Heart left ventricle (tissue), 16 donors: ENCODE measurements at regions of chr3 and their contacts with region 1.

Region 1: GRCh38 chr3:102224128-102224527 is 210.7 kb upstream of the ZPLD1 start:
- DNase-seq: peak in 1 of 5 donors; percentile 18
- ATAC-seq: peak in 3 of 4 donors; percentile 52 to 73 (median 61)
- H3K4me3 ChIP-seq: no peak overlapping the region
- H3K27ac ChIP-seq: no peak overlapping the region
- H3K4me1 ChIP-seq: peaks cover 0 to 31% (median 0%) of the 10 kb centered on the region in 12 donors
- H3K27me3 ChIP-seq: peaks cover 0 to 3% (median 0%) of the 10 kb centered on the region in 9 donors
- CTCF ChIP-seq: peak in 9 of 12 donors; percentile 16 to 52 (median 35)
- POLR2A ChIP-seq: no peak

Region 2: GRCh38 chr3:101695779-101696372 is 528.3 kb before region 1 on chr3:
- intact Hi-C with region 1: loop called in 4 of 10 experiments (anchors 5 to 10 kb)
- DNase-seq: no peak
- ATAC-seq: no peak
- H3K4me3 ChIP-seq: no peak overlapping the region
- H3K27ac ChIP-seq: no peak overlapping the region
- H3K4me1 ChIP-seq: peaks cover 0 to 5% (median 0%) of the 10 kb centered on the region in 12 donors
- H3K27me3 ChIP-seq: no peaks in the 10 kb centered on the region
- CTCF ChIP-seq: peak; percentile 58 to 82 (median 70)
- POLR2A ChIP-seq: no peak

Region 3: DNA sequence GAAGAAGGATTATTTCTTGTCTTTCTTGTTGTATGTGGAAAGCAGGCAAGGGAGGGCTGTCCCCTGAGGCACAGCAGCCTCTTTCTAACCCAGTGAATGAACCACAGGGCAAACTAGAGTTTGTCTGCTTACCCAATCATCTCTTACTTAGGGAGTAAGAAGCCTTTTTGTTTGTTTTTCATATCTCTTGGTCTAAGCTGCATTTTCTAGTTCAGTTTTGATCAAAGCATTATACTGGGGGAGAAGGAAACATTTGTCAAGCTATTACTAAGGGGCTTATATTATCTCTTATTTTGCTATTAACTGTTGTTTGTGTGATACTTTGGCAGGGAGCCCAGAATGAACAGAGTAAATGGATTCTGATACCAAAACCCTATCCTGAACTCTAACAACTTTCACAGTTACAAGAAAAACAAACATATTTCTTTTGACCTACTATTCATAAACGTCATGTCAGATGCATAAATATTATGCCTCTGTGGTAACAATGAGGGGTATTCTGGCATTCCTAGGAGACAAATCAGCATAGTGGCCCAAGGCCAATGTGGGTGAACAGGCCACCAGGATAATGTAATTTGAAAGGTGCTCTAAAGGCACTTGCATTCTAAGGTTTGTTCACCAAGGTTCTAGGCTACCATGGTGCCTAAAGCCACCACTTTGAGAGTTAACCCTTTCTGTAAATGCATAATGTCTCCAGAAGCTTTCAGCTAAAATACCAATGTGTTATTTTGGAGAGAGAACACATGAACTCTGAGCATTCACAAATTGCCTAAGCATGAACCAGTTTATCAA is 60.9 kb before region 1 on chr3:
- intact Hi-C with region 1: no loop called
- DNase-seq: peak in 3 of 5 donors; percentile 15 to 52 (median 43)
- ATAC-seq: peak in 3 of 4 donors; percentile 74 to 84 (median 81)
- H3K4me3 ChIP-seq: no peak overlapping the region
- H3K27ac ChIP-seq: peak overlapping the region in 11 of 12 donors; percentile 3 to 61 (median 22)
- H3K4me1 ChIP-seq: peaks cover 0 to 18% (median 9%) of the 10 kb centered on the region in 12 donors
- H3K27me3 ChIP-seq: no peaks in the 10 kb centered on the region
- CTCF ChIP-seq: no peak
- POLR2A ChIP-seq: no peak